ENCODE measurements at regions of chr5 and their contacts with region 1.

Region 1: DNA sequence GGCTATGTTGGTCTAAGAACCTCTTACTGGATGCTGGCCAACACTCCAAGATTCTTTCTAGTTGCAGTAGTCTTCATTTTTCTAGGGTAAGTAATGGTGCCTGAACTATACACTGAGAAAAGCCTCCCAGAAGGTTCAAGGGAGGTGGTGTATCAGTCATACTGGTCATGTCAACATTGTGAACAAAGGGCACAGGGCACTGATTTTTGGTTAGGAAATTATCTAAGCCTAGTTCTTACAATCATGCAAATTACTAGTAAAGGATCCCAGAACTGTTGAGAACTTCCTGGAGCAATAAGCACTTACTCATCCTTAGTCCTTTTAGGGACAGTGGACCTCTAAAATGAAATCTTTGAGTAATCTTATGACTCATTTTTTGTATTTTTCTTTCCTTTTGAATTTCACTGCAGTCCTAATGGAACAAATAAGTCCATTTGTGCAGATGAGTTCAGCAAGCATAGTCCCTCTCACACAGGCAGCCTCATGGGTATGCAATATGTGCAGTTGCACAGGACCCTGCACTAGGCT is 21.1 kb upstream of the CDC42SE2 start:
- DNase-seq: peak; percentile 38
- H3K4me3 Mint-ChIP-seq: no peak overlapping the region
- H3K27ac Mint-ChIP-seq: no peak overlapping the region
- H3K4me1 Mint-ChIP-seq: peaks cover 16% of the 10 kb centered on the region
- H3K27me3 Mint-ChIP-seq: no peaks in the 10 kb centered on the region

Region 2: DNA sequence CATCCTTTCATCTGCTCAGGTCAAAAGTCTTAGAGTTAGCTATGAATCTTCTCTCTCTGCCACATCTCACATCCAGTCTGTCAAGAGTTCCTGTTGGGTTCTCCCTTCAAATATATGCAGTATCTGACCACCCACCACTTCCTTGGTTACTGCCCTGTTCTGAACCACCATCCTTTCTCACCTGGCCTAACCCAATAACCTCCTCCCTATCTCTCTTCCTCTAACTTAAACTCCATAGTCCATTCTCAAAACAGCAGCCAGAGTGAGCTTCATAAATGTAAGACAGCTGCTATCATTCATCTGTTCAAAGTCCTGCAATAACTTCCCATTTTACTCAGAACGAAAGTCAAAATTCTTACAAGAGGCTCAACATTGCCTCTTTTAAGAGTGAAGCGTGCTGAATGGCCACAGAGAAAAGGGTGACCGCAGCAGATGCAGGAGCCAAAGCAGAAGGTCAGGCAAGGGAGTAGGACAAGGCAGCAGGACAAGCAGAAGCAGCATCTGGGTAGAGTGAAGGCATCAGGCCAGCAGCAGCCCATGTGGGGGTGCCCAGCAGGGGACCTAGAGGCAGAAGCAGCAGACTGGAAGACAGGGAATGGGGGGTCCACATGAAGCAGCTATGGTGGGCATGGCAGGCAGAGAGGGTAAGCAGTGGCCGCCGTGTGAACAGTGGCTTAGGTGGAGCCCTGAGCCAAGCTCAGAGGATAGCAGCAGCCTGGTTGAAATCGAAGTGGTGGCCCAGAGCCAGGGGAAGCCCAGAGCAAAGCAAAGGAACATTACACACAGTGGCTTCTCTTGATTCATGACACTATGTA is 18.2 kb before region 1 on chr5:
- CTCF ChIA-PET with region 1: no interaction called
- intact Hi-C with region 1: loop called (anchors 1 kb)
- DNase-seq: peak; percentile 30
- H3K4me3 Mint-ChIP-seq: no peak overlapping the region
- H3K27ac Mint-ChIP-seq: no peak overlapping the region
- H3K4me1 Mint-ChIP-seq: peaks cover 27% of the 10 kb centered on the region
- H3K27me3 Mint-ChIP-seq: no peaks in the 10 kb centered on the region

Region 3: DNA sequence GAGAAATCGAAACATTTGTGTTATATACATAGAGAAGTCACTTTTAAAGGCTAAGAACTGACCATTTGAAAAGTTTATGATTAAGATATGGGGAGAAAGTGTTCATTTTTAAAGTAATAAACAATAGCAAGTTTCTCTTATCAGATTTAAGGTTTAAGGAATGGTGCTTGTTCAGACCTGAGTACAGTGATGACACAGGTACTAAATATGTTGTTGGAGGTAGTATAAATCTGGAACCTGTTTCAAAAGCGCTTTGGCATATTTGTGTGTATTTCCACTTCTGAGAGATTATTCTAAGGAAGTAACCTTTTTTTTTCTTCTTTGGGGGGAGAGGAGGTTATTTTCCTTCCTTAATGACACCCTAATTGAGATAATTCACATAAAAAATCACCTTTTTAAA is 39.4 kb after region 1 on chr5:
- CTCF ChIA-PET with region 1: no interaction called
- intact Hi-C with region 1: no loop called
- DNase-seq: no peak
- H3K4me3 Mint-ChIP-seq: peak overlapping the region; percentile 66
- H3K27ac Mint-ChIP-seq: peak overlapping the region; percentile 93
- H3K4me1 Mint-ChIP-seq: peaks cover 90% of the 10 kb centered on the region
- H3K27me3 Mint-ChIP-seq: no peaks in the 10 kb centered on the region

Region 4: DNA sequence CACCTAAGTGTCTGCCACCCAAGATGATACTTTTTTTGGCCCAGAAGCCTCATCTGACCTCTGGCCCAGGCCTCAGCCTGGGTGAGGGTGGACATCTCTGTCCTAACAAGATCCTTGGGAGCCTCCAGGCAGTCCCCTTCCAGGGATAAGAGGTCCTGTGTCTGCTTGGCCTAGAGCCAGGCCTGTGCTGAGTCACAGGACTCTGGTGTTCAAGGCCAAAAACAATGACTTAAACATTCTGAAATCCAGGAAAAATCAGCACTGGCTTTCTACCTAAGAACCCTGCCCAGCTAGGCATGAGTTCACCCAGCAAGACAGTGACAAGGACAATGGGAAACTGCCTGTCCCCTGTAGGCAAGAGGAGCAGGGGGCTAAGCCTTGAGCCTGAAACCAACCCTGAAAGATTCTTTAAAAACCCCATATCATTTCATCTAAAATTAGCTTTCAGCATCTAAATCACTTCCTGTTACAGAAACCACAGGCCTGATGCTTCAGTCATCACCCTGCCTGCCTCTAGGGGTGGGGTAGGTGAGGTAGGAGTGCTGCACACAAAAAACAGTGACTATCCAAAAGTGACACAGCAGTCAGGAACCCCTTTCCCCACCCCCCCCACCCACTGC is 860.6 kb after region 1 on chr5:
- CTCF ChIA-PET with region 1: no interaction called
- intact Hi-C with region 1: no loop called
- DNase-seq: peak; percentile 84
- H3K4me3 Mint-ChIP-seq: no peak overlapping the region
- H3K27ac Mint-ChIP-seq: peak overlapping the region; percentile 73
- H3K4me1 Mint-ChIP-seq: peaks cover 60% of the 10 kb centered on the region
- H3K27me3 Mint-ChIP-seq: no peaks in the 10 kb centered on the region